Caco-2 (cell line): ENCODE measurements at regions of chr19 and their contacts with region 1.

Region 1: GRCh38 chr19:47130591-47131227 is at the start of gene SAE1:
- DNase-seq: peak; percentile 99
- H3K4me3 ChIP-seq: peak within 1 kb of the TSS; percentile 86
- H3K4me3 Mint-ChIP-seq: peak within 1 kb of the TSS; percentile 94
- H3K27ac Mint-ChIP-seq: peak within 1 kb of the TSS; percentile 98
- H3K4me1 ChIP-seq: peaks cover 37% of the 10 kb centered on the region
- H3K4me1 Mint-ChIP-seq: peaks cover 32% of the 10 kb centered on the region
- H3K27me3 ChIP-seq: no peaks in the 10 kb centered on the region
- H3K27me3 Mint-ChIP-seq: no peaks in the 10 kb centered on the region
- CTCF ChIP-seq: peak in 1 of 2 experiments; percentile 70
- total RNA-seq, gene SAE1: 238 and 251 TPM in 2 replicates

Region 2: DNA sequence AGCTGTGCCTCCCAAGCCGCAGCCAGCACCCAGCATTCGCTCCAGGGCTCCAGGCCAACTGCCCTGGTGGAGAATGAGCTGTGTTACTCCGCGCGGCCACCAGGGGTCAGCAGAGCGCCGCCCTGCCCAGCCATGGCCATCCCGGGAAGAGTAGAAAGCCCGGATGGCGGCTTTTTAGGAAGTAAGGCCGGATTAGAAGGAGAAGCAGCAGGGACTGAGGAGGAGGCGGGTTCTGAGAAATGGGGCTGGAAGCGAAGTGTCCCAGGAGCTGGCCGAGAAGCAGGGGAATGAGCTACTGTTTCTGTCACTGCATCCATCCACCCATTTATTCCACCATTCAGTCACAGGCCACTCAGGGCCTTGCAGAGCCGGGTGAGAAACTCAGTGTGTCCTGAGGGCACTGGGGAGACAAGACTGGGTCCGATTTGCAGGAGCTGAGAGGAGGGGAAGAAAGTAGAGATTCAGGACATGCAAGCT is 117.6 kb before region 1 on chr19:
- CTCF ChIA-PET with region 1: interaction called, 11 read pairs
- POLR2A ChIA-PET with region 1: no interaction called
- intact Hi-C with region 1: loop called (anchors 1 kb)
- DNase-seq: peak; percentile 82 to 92
- H3K4me3 ChIP-seq: 0 out of 2 replicates have a peak overlapping the region, but pooled peaks have one; percentile 7
- H3K4me3 Mint-ChIP-seq: peak overlapping the region; percentile 9
- H3K27ac Mint-ChIP-seq: peak overlapping the region; percentile 10
- H3K4me1 ChIP-seq: no peaks in the 10 kb centered on the region
- H3K4me1 Mint-ChIP-seq: peaks cover 11% of the 10 kb centered on the region
- H3K27me3 ChIP-seq: no peaks in the 10 kb centered on the region
- H3K27me3 Mint-ChIP-seq: peaks cover 3% of the 10 kb centered on the region
- CTCF ChIP-seq: peak; percentile 99

Region 3: GRCh38 chr19:47348819-47349795 is 218.4 kb after region 1 on chr19 and contains the start of gene DHX34:
- CTCF ChIA-PET with region 1: no interaction called
- POLR2A ChIA-PET with region 1: no interaction called
- intact Hi-C with region 1: no loop called
- DNase-seq: peak; percentile 99
- H3K4me3 ChIP-seq: peak within 1 kb of the TSS; percentile 86
- H3K4me3 Mint-ChIP-seq: peak within 1 kb of the TSS; percentile 95
- H3K27ac Mint-ChIP-seq: peak within 1 kb of the TSS; percentile 88
- H3K4me1 ChIP-seq: no peaks in the 10 kb centered on the region
- H3K4me1 Mint-ChIP-seq: peaks cover 27% of the 10 kb centered on the region
- H3K27me3 ChIP-seq: no peaks in the 10 kb centered on the region
- H3K27me3 Mint-ChIP-seq: no peaks in the 10 kb centered on the region
- CTCF ChIP-seq: peak; percentile 97 to 98
- total RNA-seq, gene DHX34: 28.7 TPM in 2 replicates